ENCODE measurements at regions of chr7 and their contacts with region 1.

Region 1: GRCh38 chr7:5237286-5237685 is 45.5 kb upstream of the SLC29A4 start:
- DNase-seq: peak; percentile 88
- ATAC-seq: peak; percentile 89

Region 2: DNA sequence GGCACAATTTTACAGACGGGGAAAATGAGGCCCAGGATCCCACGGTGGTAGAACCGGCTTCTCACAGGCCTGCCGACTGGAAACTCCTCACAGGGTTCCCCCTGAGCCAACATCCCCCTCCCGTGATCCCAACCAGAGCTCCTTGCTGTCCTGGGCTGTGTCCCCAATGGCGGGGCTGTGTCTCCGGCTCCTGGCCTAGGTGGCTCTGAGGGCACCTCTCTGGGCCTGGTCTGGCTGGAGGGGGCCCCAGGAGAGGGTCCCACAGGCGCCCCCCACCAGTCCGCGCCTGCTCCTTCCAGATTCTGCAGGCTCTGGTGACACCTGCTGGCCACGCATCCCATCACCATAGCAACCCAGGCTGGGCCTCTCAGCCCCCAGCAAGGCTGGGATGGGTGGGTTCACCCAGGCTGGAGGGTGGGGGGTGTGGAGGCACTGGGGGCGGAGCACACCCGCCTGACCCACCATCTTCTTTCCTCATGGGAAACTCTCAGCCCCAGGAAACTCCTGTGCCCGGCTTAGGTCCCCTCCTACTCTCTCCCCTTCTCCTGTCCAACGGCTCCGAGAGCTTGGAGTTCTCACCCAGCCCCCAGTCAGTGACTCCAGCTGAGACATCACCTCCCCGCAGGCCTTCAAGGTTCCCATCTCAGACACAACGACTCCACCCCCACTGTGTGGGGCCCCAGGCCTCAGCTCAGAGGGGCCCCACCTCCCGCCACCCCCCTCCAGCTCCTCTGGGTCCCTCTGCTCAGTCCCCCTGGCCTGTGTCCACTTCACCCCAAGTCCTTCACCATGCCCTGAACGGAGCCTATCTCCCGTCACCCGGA is 213.5 kb after region 1 on chr7:
- intact Hi-C with region 1: loop called (anchors 1 kb)
- DNase-seq: peak; percentile 76
- ATAC-seq: peak; percentile 66

Measured in Right ventricle myocardium inferior (tissue), 1 donor.